ENCODE measurements at regions of chr1 and their contacts with region 1.

Region 1: DNA sequence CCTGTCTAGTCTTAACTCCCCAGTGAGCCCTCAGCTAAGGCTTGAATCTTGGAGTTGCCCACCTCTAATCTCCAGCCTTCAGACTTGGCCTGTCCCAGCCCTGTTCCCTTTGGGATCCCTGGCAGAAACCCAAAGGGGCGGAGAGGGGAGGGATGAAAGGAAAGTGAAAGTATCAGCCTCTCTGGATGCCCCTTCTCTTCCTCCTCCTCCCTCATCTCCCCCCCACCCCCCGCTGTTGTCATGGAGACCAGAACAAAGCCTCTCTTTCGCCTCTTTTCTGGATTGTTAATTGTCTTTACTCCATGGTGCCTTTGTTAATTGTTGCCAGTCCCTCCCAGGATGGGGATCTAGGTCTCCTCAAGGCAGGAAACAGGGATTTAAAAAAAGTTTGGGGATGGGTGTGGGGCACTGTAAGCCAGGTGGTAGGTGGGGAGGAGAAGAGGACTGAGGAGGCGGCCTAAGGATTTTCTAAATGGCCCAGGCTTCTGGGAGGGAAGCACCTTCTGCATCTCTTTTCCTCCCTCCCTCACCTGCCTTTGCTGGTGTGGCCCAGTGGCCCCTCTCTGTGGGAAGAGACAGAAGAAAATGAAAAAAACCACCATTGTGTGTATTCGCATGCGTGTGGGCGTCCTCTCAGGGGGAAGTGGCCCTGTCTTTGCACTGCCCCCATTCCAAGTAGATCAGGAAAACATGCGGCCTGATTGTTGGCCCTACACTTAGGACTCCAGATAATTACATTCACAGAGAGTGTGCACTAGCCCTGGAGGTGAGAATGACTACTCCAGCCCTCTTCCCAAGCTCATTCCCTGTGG is 7.5 kb upstream of the SOX13 start:
- DNase-seq: no peak
- ATAC-seq: no peak
- H3K4me3 ChIP-seq: no peak overlapping the region
- H3K27ac ChIP-seq: no peak overlapping the region
- H3K4me1 ChIP-seq: no peaks in the 10 kb centered on the region
- H3K27me3 ChIP-seq: peaks cover 0 to 1% of the 10 kb centered on the region in 2 experiments; a peak in 3 of 4 replicates
- CTCF ChIP-seq: no peak
- EP300 ChIP-seq: no peak
- POLR2A ChIP-seq: no peak
- RAD21 ChIP-seq: no peak

Region 2: DNA sequence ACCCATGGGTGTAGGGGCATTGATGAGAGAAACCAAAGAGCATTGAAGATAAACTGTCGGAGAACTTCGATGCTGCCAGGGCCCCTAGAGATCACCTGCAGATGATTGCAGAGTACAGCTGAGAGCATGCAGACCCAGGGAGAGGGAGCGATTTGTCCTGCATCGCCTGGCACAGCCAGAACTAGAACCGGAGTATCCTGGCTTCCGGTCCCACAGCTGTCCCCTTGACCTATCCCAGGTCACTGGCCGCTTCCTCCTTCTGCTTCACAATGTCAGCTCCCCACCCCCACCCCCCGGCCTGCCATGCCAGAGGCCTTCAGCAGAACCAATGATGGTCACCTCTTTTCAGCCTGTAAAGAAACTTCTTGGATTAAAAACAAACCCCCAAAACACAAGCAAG is 21.7 kb before region 1 on chr1:
- CTCF ChIA-PET with region 1: no interaction called
- POLR2A ChIA-PET with region 1: interaction called, 11 read pairs
- RAD21 ChIA-PET with region 1: no interaction called
- SMC1A ChIA-PET with region 1: interaction called, 3 read pairs
- in situ Hi-C with region 1: no loop called
- intact Hi-C with region 1: no loop called
- DNase-seq: no peak
- ATAC-seq: no peak
- H3K4me3 ChIP-seq: no peak overlapping the region
- H3K27ac ChIP-seq: no peak overlapping the region
- H3K4me1 ChIP-seq: no peaks in the 10 kb centered on the region
- H3K27me3 ChIP-seq: no peaks in the 10 kb centered on the region
- CTCF ChIP-seq: no peak
- EP300 ChIP-seq: no peak
- POLR2A ChIP-seq: no peak
- RAD21 ChIP-seq: no peak

Measured in GM12878 (cell line).